ENCODE measurements at regions of chr5 and their contacts with region 1.

Region 1: DNA sequence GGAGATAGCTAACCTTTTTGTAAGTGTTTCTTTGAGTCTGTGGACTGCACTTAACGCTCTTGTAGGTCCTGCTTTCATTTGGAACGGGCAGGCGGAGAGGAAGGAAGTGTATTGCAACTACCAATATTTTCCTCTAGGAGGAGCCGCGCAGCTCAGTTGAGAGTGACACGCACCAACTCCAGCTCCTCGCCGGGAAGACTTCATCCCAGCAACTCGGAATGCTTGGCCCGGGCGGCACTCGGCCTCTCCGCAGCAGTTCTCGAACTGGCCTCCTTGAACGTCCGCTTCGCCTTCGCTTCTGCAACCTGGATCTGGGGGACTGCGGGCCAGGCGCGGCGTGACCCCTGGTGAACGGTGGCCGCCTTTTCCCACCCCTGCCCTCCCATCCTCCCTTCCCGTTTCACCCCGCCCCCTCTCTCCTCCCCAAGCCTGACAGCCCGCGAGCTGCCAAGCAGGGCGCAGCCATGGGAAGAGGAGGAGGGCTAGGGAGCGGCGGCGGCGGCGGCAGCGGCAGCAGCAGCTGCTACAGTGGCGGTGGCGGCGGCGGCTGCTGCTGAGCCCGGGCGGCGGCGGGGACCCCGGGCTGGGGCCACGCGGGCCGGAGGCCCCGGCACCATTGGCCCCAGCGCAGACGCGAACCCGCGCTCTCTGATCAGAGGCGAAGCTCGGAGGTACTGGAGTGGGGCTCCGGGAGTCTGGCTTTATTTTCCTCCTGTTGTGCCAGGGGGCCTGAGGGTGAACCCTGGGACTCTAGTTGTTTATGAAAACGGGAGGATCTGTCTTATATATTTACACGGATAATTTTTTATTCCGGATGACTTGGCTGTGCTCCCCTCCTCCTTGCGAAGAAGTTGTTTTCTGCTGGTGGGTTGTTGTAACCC is at the start of gene GHR:
- DNase-seq: peak; percentile 86 to 87
- ATAC-seq: peak; percentile 86 to 91
- H3K4me3 ChIP-seq: peak within 1 kb of the TSS; percentile 62 to 90 (median 80)
- H3K27ac ChIP-seq: peak within 1 kb of the TSS; percentile 71 to 90 (median 85)
- H3K4me1 ChIP-seq: peaks cover 28 to 30% of the 10 kb centered on the region in 2 donors
- H3K27me3 ChIP-seq: no peaks in the 10 kb centered on the region
- CTCF ChIP-seq: peak; percentile 72 to 89 (median 84)
- POLR2A ChIP-seq: peak in 1 of 2 donors; percentile 31
- total RNA-seq, gene GHR: 38.9 to 105 (median 74.8) TPM

Region 2: GRCh38 chr5:41903892-41904799 is 519.4 kb before region 1 on chr5 and contains the start of gene RIMOC1:
- in situ Hi-C with region 1: no loop called
- intact Hi-C with region 1: loop called (anchors 10 kb)
- DNase-seq: peak; percentile 98 to 99
- ATAC-seq: peak; percentile 98 to 99
- H3K4me3 ChIP-seq: peak within 1 kb of the TSS; percentile 80 to 88 (median 84)
- H3K27ac ChIP-seq: peak within 1 kb of the TSS; percentile 89 to 95 (median 93)
- H3K4me1 ChIP-seq: peaks cover 27 to 46% of the 10 kb centered on the region in 2 donors
- H3K27me3 ChIP-seq: no peaks in the 10 kb centered on the region
- CTCF ChIP-seq: peak in 2 of 5 experiments; percentile 50 to 59
- POLR2A ChIP-seq: peak; percentile 85 to 95
- total RNA-seq, gene RIMOC1: 5.0 to 8.2 (median 6.2) TPM

Region 3: GRCh38 chr5:42514754-42515153 is 91.2 kb after region 1 on chr5:
- in situ Hi-C with region 1: no loop called
- intact Hi-C with region 1: loop called (anchors 5 kb)
- DNase-seq: peak; percentile 76 to 86
- ATAC-seq: peak; percentile 53 to 70
- H3K4me3 ChIP-seq: no peak overlapping the region
- H3K27ac ChIP-seq: peak overlapping the region; percentile 83 to 91 (median 84)
- H3K4me1 ChIP-seq: peaks cover 70% of the 10 kb centered on the region in 2 donors
- H3K27me3 ChIP-seq: no peaks in the 10 kb centered on the region
- CTCF ChIP-seq: peak; percentile 45 to 58 (median 52)
- POLR2A ChIP-seq: no peak

Region 4: DNA sequence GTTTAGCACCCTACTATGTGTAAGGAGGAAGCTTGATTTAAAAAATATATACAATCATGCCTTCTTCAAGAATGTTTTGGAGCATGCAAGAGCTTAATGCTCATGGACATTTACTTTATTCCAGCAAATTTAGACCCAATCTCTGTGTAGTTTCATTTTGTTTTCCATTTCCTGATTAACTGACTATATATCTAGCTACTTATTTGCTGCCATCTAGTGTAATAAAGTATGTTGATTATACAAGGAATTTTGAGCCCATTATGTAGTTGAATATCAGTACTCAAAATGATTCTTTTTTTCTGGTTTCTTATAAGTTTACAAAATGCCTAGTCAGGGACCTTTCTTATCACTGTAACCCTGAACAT is 233.1 kb after region 1 on chr5:
- in situ Hi-C with region 1: no loop called
- intact Hi-C with region 1: loop called (anchors 5 kb)
- DNase-seq: no peak
- ATAC-seq: no peak
- H3K4me3 ChIP-seq: peak overlapping the region in 1 of 4 donors; percentile 24
- H3K27ac ChIP-seq: peak overlapping the region in 1 of 4 donors; percentile 10
- H3K4me1 ChIP-seq: peaks cover 40 to 42% of the 10 kb centered on the region in 2 donors
- H3K27me3 ChIP-seq: no peaks in the 10 kb centered on the region
- CTCF ChIP-seq: peak in 2 of 5 experiments; percentile 10 to 33
- POLR2A ChIP-seq: no peak

Region 5: DNA sequence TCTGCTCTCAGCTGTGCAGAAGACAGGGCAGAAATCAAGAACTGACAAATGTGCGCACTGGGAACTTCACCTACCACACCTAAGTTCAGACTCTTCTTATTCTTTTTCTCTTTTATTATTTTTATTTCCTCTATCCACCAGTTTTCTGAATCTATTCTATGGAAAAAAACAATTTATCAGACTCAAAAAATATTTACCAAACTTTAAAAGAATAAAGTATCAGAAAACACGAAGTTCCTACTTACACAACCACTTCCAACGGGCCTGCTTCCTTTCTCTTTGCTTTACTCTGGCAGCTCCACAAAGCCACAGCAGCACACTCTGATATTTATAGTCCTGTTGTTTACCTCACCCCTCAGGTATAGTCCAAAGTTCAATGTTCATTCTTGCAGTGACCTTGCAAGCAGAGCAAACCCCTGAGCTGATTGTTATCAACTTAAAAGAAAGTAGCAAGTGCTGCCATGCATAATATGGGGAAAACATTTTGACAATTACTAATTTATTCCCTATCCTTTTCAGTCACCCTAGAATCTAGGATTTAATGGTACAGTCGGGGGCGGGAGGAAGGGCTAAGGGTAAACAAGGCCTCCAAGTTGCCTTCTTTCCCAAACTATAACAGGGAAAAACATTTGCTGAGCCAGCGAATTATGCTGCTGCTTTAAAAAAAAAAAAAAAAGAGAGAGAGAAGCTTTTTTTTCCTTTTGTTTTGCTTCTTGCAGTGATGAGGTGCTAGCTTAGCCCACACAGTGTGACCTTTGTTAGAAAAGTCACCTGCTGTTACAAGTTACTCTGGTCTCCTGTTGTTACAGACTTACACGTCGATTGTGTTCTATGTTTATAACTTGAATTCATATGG is 388.3 kb after region 1 on chr5 and contains the start of gene SELENOP:
- in situ Hi-C with region 1: no loop called
- intact Hi-C with region 1: loop called (anchors 5 kb)
- DNase-seq: peak; percentile 72 to 74
- ATAC-seq: peak; percentile 96 to 97
- H3K4me3 ChIP-seq: peak within 1 kb of the TSS; percentile 56 to 76 (median 64)
- H3K27ac ChIP-seq: peak within 1 kb of the TSS; percentile 81 to 91 (median 86)
- H3K4me1 ChIP-seq: peaks cover 27 to 30% of the 10 kb centered on the region in 2 donors
- H3K27me3 ChIP-seq: no peaks in the 10 kb centered on the region
- CTCF ChIP-seq: no peak
- POLR2A ChIP-seq: peak; percentile 90 to 95
- total RNA-seq, gene SELENOP: 231 to 290 (median 243) TPM

Region 6: DNA sequence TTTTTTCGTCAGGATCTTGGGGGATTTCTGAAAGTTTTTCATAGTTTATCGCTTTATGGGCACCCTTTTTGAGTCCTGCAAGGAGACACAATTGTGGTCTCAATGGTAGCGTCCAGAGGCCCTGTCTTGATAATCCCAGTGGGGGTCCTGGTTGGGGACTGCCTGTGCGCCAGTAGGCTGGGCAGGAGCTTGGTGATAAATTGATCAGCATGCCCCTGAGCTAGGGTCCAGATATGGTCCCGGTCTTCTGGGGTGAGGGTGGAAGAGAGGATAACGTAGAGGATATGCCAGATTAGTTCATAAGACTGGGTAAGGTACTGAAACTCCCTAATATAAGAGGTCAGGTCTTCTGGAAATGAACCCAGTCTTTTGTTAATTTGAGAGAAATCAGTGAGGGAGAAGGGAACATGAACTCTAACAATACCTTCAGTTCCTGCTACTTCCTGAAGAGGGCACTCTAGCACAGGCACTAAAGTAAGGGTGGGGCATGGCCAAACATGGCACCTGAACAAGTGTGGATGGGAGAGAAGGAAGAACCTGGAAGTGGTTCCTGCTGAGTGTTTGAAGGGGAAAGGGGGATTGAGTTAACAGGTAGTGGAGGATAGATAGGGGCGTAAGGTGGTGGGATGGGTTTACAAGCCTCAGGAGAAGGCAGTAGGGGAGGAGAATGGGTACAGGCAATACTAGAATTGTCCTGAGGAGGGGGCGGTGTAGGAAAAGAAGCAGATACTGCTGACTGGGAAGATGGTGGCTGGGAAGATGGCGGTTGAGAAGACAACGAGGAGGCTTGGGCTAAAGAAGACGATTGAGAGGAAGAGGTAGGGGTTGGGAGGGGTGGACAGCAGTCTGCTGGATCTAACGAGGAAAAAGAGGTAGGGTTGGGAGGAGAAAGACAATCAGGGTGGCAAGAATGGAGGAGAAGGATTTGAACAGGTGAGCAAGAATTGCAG is 650.3 kb after region 1 on chr5:
- in situ Hi-C with region 1: no loop called
- intact Hi-C with region 1: no loop called
- DNase-seq: no peak
- ATAC-seq: peak in 1 of 2 donors; percentile 49
- H3K4me3 ChIP-seq: no peak overlapping the region
- H3K27ac ChIP-seq: peak overlapping the region in 2 of 4 donors; percentile 74 to 84
- H3K4me1 ChIP-seq: peaks cover 21 to 28% of the 10 kb centered on the region in 2 donors
- H3K27me3 ChIP-seq: no peaks in the 10 kb centered on the region
- CTCF ChIP-seq: peak; percentile 31 to 71 (median 57)
- POLR2A ChIP-seq: no peak

Measured in gastrocnemius medialis (tissue), 4 donors.